Activated T-helper 2 cell treated with anti-CD3 and anti-CD28 coated beads, Interferon-gamma antibody, Interleukin-2, Interleukin-4, amounts not matched to agents 10 μg/mL and 5 μg/mL and 100 μg/mL, durations not matched to agents 14 hours and 24 hours and 36 hours (primary cell): ENCODE measurements at regions of chr14 and their contacts with region 1.

Region 1: GRCh38 chr14:77457522-77458290 is at the starts of genes AHSA1 and VIPAS39:
- DNase-seq: peak; percentile 95
- H3K4me3 Mint-ChIP-seq: peak within 1 kb of the TSS; percentile 97
- H3K27ac Mint-ChIP-seq: peak within 1 kb of the TSS; percentile 98
- H3K4me1 Mint-ChIP-seq: peaks cover 23% of the 10 kb centered on the region
- H3K27me3 Mint-ChIP-seq: no peaks in the 10 kb centered on the region
- total RNA-seq, gene AHSA1: 301 and 332 TPM in 2 replicates
- total RNA-seq, gene VIPAS39: 15.7 and 16.5 TPM in 2 replicates

Region 2: GRCh38 chr14:77097700-77098528 is 359.8 kb before region 1 on chr14 and contains the start of gene CIPC:
- intact Hi-C with region 1: loop called (anchors 1 kb)
- DNase-seq: peak; percentile 100
- H3K4me3 Mint-ChIP-seq: peak within 1 kb of the TSS; percentile 91
- H3K27ac Mint-ChIP-seq: peak within 1 kb of the TSS; percentile 97
- H3K4me1 Mint-ChIP-seq: peaks cover 24% of the 10 kb centered on the region
- H3K27me3 Mint-ChIP-seq: no peaks in the 10 kb centered on the region
- total RNA-seq, gene CIPC: 10.9 and 11.3 TPM in 2 replicates

Region 3: DNA sequence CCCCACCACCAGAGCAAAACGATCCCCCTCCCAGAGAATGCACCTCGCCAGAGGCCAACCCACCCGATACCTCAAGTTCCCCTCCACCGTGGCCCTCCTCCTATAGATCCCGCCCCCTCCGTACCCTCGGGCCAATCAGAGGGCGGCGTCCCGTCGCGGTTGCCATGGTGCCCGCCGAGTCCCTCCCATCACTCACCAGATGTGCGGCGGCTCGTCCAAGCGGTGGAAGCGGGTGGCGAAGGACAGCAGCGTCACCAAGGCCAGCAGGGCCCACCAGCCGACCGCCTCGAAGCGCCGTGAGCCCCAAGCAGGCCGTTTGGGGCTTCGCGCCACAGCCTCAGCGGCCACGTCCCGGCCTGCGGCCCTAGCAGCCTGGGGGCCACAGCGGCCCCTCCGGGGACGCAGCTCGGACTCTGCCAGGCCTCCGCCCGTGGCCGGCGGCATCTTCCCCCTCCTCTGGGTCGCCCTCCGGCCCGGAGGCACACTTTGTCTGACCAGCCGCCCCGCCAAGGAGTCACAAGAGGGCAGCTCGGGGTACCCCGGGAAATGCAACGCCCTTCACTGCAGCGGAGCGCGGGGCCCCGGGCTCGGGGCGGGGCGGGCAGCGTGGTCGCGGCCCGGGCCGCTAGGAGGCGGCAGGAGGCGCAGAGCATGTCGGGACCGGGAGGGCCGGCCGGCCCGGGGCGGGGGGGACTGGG is 137.3 kb before region 1 on chr14 and contains the start of gene POMT2:
- intact Hi-C with region 1: loop called (anchors 1 kb)
- DNase-seq: peak; percentile 90
- H3K4me3 Mint-ChIP-seq: peak within 1 kb of the TSS; percentile 98
- H3K27ac Mint-ChIP-seq: peak within 1 kb of the TSS; percentile 100
- H3K4me1 Mint-ChIP-seq: peaks cover 20% of the 10 kb centered on the region
- H3K27me3 Mint-ChIP-seq: no peaks in the 10 kb centered on the region
- total RNA-seq, gene POMT2: 23.4 and 27.7 TPM in 2 replicates

Region 4: DNA sequence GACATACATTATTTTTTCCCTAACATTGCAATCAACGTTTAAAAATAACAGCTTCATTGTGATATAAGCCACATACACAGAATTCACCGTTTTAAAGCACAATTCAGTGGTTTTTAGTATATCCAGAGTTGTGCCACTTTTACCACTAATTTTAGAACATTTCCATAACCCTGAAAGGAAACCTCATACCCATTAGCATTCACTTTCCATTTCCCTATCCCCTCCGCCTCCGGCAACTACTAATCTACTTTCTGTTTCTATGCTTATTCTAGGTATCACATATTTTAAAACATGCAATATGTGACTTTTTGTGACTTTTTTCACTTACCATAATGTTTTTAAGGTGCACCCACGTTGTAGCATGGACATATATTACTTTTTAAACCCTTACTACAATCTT is 96.5 kb after region 1 on chr14:
- intact Hi-C with region 1: loop called (anchors 1 kb)
- DNase-seq: no peak
- H3K4me3 Mint-ChIP-seq: peak overlapping the region; percentile 35
- H3K27ac Mint-ChIP-seq: peak overlapping the region; percentile 65
- H3K4me1 Mint-ChIP-seq: peaks cover 16% of the 10 kb centered on the region
- H3K27me3 Mint-ChIP-seq: no peaks in the 10 kb centered on the region

Region 5: DNA sequence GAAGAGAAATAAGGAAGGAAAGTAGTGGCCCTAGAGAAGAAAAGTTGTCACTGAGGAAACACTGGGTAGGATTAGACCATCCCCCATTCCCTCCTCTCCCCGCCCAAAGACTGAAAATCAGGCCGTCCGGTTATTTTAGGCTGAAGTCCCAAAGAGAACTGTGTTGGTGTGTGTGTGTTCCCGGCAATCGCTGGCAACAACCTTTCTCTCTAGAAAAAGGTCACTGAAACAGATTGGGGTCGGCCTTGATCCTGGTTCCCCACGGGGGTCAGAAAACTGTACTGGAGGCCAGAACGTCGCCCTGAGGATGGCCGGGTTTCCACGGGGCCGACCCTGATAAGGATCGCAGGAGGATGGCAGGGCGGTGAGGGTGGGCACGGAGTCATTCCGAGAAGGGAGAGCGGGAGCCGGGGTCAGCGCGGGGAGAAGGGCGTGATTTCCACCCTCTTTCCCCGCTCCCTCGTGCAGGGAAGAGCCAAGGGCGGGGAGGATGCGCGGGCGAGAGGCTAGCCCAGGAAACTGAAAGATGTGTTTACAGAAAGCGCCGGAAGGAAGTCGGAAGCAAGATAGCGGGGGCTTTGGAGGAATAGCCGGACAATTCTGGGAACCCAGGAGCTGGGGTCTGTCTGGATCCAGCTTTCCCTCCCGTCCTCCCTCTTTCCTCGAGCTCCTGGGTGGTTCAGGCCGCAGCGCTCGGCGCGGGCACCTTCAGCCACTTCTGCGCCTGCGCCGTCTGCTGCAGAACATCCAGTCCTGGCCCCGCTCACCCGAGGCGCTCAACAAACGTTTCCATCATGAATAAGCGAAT is 184.0 kb after region 1 on chr14:
- intact Hi-C with region 1: loop called (anchors 5 kb)
- DNase-seq: peak; percentile 46
- H3K4me3 Mint-ChIP-seq: peak overlapping the region; percentile 77
- H3K27ac Mint-ChIP-seq: peak overlapping the region; percentile 86
- H3K4me1 Mint-ChIP-seq: peaks cover 13% of the 10 kb centered on the region
- H3K27me3 Mint-ChIP-seq: peaks cover 2% of the 10 kb centered on the region

Region 6: GRCh38 chr14:77760381-77761246 is 302.9 kb after region 1 on chr14 and contains the start of gene SNW1:
- intact Hi-C with region 1: loop called (anchors 1 kb)
- DNase-seq: peak; percentile 90
- H3K4me3 Mint-ChIP-seq: peak within 1 kb of the TSS; percentile 97
- H3K27ac Mint-ChIP-seq: peak within 1 kb of the TSS; percentile 97
- H3K4me1 Mint-ChIP-seq: peaks cover 28% of the 10 kb centered on the region
- H3K27me3 Mint-ChIP-seq: peaks cover 4% of the 10 kb centered on the region
- total RNA-seq, gene SNW1: 101 and 114 TPM in 2 replicates